ENCODE measurements at regions of chr20 and their contacts with region 1.

Region 1: DNA sequence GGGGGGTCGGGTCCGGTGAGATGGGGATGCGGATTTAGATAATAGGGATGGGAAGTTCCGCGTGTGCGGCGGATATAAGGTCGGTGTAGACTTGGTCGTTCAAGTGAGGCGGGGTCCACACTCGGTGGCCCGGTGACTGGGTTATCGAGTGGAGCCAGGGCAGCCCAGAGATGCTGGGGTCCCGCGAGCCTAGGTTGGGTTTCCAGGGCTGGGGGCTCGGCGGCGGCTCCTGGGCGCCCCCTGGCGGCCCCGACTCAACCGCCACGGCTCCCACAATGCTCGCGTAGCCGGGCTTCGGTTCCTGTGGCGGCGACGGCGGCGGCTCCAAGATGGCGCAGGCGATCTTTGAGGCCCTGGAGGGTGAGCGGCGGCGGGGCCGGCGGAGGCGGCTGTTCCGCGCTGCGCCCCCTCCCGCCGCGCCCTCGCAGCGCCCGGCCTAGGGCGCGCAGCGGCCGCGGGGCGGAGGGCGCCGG is at the start of gene ZNF341:
- DNase-seq: peak; percentile 92
- H3K4me3 Mint-ChIP-seq: peak within 1 kb of the TSS; percentile 75
- H3K27ac Mint-ChIP-seq: peak within 1 kb of the TSS; percentile 82
- H3K4me1 Mint-ChIP-seq: peaks cover 19% of the 10 kb centered on the region
- H3K27me3 Mint-ChIP-seq: no peaks in the 10 kb centered on the region
- total RNA-seq, gene ZNF341: 5.9 TPM

Region 2: GRCh38 chr20:33443512-33444239 is 288.1 kb before region 1 on chr20 and contains the start of gene SNTA1:
- CTCF ChIA-PET with region 1: interaction called, 3 read pairs
- POLR2A ChIA-PET with region 1: no interaction called
- intact Hi-C with region 1: loop called (anchors 5 kb)
- DNase-seq: peak; percentile 94
- H3K4me3 Mint-ChIP-seq: peak within 1 kb of the TSS; percentile 84
- H3K27ac Mint-ChIP-seq: peak within 1 kb of the TSS; percentile 81
- H3K4me1 Mint-ChIP-seq: peaks cover 17% of the 10 kb centered on the region
- H3K27me3 Mint-ChIP-seq: no peaks in the 10 kb centered on the region
- total RNA-seq, gene SNTA1: 5.6 to 5.7 TPM

Region 3: DNA sequence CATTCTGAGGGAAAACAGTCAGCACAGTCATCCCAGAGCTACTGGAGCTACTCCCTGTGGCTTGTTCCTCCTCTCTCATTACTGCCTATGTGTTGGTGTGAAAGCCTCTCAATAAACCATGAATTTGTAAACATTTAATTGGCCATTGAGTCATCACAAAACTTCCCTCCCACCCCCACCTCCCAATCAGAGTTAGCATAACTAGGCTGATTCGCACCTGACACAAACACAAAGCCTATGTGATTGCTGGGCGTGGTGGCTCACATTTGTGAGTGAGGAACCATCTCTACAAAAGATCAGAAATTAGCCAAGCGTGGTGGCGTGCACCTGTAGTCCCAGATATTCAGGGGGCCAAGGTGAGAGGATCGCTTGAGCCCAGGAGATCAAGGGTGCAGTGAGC is 271.0 kb before region 1 on chr20:
- CTCF ChIA-PET with region 1: interaction called, 3 read pairs
- POLR2A ChIA-PET with region 1: no interaction called
- intact Hi-C with region 1: loop called (anchors 1 kb)
- DNase-seq: peak; percentile 21
- H3K4me3 Mint-ChIP-seq: no peak overlapping the region
- H3K27ac Mint-ChIP-seq: no peak overlapping the region
- H3K4me1 Mint-ChIP-seq: no peaks in the 10 kb centered on the region
- H3K27me3 Mint-ChIP-seq: no peaks in the 10 kb centered on the region

Region 4: DNA sequence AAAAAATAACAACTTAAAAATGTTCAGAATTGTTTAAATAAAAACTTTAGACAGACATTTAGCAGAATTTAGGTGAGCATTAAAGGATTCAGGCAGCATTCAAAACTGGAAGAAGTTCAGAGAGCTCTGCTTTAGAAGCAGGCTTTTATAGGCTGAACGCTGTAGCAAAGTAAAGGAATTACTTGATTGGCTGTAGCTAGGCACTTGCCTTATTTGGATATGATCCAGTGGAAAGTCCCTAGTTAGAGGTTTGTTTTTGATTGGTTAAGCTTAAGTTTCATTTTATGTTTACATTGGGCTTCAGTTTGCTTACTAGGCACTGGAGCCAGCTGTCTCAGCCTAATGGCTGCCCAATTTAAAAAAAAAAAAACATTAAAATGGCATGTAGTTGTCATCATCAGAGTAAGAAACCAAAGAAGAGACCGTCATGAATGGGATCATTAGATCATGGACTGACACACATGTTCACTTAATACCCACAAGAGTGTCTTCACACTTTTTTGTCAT is 176.8 kb before region 1 on chr20:
- CTCF ChIA-PET with region 1: no interaction called
- POLR2A ChIA-PET with region 1: no interaction called
- intact Hi-C with region 1: loop called (anchors 5 kb)
- DNase-seq: peak; percentile 42
- H3K4me3 Mint-ChIP-seq: peak overlapping the region; percentile 46
- H3K27ac Mint-ChIP-seq: peak overlapping the region; percentile 89
- H3K4me1 Mint-ChIP-seq: peaks cover 31% of the 10 kb centered on the region
- H3K27me3 Mint-ChIP-seq: no peaks in the 10 kb centered on the region

Region 5: GRCh38 chr20:33686100-33686983 is 45.4 kb before region 1 on chr20 and contains the start of gene E2F1:
- CTCF ChIA-PET with region 1: interaction called, 4 read pairs
- POLR2A ChIA-PET with region 1: no interaction called
- intact Hi-C with region 1: loop called (anchors 2 kb)
- DNase-seq: peak; percentile 98
- H3K4me3 Mint-ChIP-seq: peak within 1 kb of the TSS; percentile 93
- H3K27ac Mint-ChIP-seq: peak within 1 kb of the TSS; percentile 87
- H3K4me1 Mint-ChIP-seq: peaks cover 70% of the 10 kb centered on the region
- H3K27me3 Mint-ChIP-seq: no peaks in the 10 kb centered on the region
- total RNA-seq, gene E2F1: 66.8 to 67.8 TPM

Region 6: DNA sequence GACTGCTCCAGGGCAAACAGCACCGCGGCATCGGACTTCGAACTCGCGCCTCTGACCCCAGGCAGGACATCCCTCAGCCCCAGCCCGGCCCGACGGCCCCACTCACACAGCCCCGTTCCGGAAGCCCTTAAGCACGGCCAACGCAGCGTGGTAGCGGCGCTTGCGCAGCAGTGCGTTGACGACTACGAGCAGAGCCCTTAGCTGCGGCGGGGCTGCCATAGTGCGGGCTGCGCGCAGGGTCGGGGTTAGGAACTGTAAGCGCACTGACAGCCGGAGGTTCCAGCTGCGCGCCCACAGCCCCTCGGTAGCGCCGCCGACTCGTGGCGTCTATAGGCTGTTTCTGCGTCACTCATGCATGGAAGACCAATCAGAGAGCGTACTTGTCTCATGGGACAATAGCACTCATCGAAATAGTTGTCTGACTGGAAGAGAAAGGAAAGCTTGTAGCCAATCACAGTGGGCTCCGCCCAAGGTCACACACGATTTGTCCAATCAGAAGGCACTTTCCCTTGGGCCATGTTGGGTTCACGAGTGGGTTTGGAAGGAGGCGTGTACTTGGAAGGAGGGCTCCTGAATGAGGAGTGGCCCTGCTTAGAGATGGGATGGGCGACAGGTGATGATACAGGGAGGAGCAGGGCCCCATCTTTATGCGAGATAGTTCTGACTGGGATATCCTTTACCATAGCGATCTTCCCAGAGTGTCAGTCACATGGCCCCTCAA is 11.6 kb before region 1 on chr20 and contains the start of gene PXMP4:
- CTCF ChIA-PET with region 1: interaction called, 16 read pairs
- POLR2A ChIA-PET with region 1: interaction called, 24 read pairs
- intact Hi-C with region 1: loop called (anchors 1 kb)
- DNase-seq: peak; percentile 95
- H3K4me3 Mint-ChIP-seq: peak within 1 kb of the TSS; percentile 95
- H3K27ac Mint-ChIP-seq: peak within 1 kb of the TSS; percentile 75
- H3K4me1 Mint-ChIP-seq: peaks cover 23% of the 10 kb centered on the region
- H3K27me3 Mint-ChIP-seq: no peaks in the 10 kb centered on the region
- total RNA-seq, gene PXMP4: 8.7 to 11.6 TPM

Measured in activated CD4-positive, alpha-beta memory T cell treated with anti-CD3 and anti-CD28 coated beads for 36 hours (primary cell).